ENCODE measurements at regions of chr17 and their contacts with region 1.

Region 1: DNA sequence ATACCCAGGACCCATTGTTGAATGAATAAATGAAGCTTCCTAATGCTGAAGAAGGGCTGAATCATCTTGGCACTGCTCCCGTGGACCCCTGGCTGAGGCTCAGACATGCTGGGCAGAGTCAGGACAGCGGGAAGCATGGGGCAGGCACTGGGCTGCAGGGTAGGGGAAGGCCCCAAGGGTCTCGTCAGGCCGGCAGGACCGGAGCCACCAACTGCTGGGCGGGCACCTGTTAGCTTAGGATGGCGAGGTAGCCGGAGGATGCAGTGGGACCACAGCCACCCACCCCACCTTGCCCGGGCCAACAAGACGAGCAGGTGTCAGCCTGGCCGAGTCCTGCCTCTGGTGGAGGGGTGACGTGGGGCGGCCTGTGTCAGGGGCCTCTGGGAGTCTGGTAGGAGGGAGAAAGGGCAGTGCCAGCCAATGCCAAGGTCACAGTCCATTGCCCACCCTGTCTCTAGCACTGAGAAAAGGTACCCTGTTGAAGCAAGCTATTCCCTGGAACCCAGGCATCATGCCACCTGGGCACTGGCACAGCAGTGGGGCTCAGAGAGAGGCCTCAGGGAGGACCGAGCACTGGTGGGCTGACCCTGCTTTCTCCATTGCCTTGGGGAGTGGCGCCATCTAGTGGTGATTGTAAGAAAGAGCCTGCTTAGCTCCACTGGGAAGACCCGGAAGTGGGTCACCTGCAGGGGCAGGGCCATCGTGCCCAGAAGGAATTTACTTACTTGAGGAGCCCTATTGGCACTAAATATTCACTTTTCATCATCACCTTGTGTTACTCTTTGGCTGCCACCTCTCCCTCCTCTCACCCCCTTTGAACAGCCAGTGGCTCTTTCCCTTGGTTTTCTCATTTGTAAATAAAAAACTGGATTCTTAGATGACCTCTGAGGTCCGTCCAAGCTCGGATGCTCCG is 3.0 kb upstream of the DLX3 start:
- DNase-seq: peak in 9 of 10 donors; percentile 38 to 94 (median 70)

Region 2: GRCh38 chr17:49861150-49861892 is 136.7 kb before region 1 on chr17:
- intact Hi-C with region 1: loop called (anchors 2 kb)
- DNase-seq: peak in 5 of 10 donors; percentile 34 to 48 (median 44)

Region 3: DNA sequence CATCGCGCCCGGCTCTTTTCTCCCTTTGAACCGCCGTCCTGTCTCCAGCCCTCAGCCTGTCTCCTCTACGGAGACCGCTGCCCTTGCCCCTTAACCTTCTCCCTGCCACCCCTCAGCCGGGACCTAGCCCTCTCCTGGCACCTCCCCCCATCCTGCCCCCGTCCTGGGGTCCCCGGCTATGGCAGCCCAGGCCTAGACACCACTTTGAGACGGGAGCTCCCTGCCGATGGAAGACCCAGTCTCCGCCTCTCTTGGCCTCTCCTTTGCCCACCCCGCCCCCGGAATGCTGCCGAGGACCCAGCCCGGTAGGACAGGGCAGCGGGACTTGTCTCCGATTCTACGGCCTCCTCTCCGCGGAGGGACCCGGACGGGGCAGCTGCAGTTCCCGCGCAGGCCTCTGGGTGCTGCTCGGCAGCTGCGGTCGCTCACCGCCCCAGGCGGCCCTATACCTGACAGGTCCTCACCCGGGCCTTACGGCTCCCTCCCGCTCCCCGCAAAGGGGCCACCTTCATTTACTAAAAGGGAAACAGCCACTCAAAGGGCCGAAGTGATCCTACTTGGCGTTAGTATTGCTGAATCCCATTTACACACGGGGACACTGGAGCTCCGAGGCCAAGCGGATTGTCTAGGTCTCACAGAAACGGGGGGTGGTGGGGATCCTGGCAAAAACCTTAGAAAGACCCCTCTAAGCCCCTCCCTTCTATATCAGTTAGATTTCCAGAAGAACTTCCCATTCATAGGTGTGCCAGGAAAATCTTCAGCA is 117.6 kb before region 1 on chr17:
- intact Hi-C with region 1: loop called (anchors 1 kb)
- DNase-seq: peak; percentile 40 to 96 (median 64)

Region 4: DNA sequence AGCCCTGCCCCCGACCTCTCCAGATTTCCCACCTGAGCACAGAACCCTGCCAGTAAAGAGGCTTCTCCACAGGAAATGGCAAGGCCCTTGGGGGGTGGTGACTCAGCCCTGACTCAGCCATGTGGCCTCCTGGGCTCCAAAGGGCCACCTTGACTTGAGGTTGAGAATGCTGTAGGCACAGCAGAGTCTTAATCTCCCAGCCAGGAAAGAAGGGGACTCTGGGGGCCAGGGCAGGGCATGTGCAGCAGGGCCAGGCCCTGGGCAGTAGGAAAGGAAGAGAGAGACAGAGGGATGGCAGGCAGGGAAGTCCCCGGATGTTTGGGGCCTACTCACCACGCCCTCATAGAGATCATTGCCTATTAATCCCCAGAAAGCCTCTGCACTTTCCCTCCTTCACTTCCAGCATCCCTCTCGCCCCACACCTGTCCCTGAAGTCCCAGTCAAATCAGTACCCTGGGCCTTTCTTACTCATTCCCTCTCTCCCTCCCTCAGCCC is 53.1 kb after region 1 on chr17:
- intact Hi-C with region 1: no loop called
- DNase-seq: peak in 1 of 10 donors; percentile 50

Region 5: GRCh38 chr17:50064258-50065001 is 66.4 kb after region 1 on chr17:
- intact Hi-C with region 1: no loop called
- DNase-seq: peak in 8 of 10 donors; percentile 28 to 93 (median 68)

Region 6: DNA sequence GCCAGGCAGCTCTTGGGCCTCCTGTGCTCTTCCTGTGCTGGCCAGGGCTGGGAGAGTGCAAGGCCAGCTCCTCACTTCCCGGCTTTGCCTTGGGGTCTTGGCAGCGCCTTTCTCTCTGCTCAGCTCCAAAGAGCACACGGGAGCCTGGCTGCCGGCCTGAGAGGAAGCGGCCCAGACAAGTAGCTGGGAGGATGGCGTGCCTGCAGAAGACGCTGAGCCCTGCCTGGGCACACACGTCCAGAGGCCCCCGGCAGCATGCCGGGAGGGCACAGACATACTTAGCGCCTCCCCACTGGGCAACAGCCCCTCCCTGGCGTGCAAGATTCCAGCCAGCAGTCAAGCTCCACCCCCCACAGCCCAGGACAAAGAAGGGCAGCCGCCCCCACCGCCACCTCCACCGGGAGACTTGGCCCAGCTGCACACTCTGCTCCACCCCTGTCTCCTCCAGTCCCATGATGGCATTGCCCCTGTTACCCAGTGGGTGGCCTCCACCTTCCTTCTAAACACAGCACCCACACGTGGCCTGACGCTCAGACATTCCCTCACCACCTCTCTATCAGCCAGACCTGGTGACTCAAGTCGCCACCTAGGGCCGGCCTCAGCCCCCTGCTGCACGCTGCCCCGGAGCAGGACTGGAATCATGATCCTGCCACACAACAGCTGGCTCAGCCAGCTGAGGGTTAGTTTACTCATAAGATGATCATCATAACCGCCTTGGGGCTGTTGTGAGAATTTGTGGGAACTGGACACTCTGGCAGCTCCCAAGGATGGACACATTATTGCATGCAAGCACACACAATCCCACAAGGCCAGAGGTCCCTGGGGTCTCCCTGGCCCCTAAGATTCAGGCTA is 180.2 kb after region 1 on chr17:
- intact Hi-C with region 1: no loop called
- DNase-seq: peak in 5 of 10 donors; percentile 20 to 85 (median 73)

Measured in posterior cingulate gyrus (tissue), 11 donors.